CD4-positive, alpha-beta T cell (primary cell): ENCODE measurements at regions of chr10 and their contacts with region 1.

Region 1: GRCh38 chr10:23438550-23439441 is at the start of gene OTUD1:
- DNase-seq: peak; percentile 88 to 98 (median 94)
- ATAC-seq: peak; percentile 87
- H3K4me3 ChIP-seq: peak within 1 kb of the TSS; percentile 74
- H3K4me3 Mint-ChIP-seq: peak within 1 kb of the TSS; percentile 98
- H3K27ac ChIP-seq: peak within 1 kb of the TSS; percentile 76 to 81
- H3K27ac Mint-ChIP-seq: peak within 1 kb of the TSS; percentile 99
- H3K4me1 ChIP-seq: peaks cover 21% of the 10 kb centered on the region
- H3K4me1 Mint-ChIP-seq: peaks cover 42% of the 10 kb centered on the region
- H3K27me3 ChIP-seq: no peaks in the 10 kb centered on the region
- H3K27me3 Mint-ChIP-seq: no peaks in the 10 kb centered on the region
- CTCF ChIP-seq: no peak
- total RNA-seq, gene OTUD1: 94.5 to 94.8 TPM

Region 2: GRCh38 chr10:22003079-22003913 is 1435.5 kb before region 1 on chr10 and contains the start of gene DNAJC1:
- CTCF ChIA-PET with region 1: no interaction called
- POLR2A ChIA-PET with region 1: no interaction called
- intact Hi-C with region 1: loop called in 1 of 2 experiments (anchors 10 kb)
- DNase-seq: peak; percentile 96 to 99 (median 98)
- ATAC-seq: peak; percentile 91
- H3K4me3 ChIP-seq: peak within 1 kb of the TSS; percentile 91
- H3K4me3 Mint-ChIP-seq: peak within 1 kb of the TSS; percentile 95
- H3K27ac ChIP-seq: peak within 1 kb of the TSS; percentile 75 to 79
- H3K27ac Mint-ChIP-seq: peak within 1 kb of the TSS; percentile 84
- H3K4me1 ChIP-seq: peaks cover 12% of the 10 kb centered on the region
- H3K4me1 Mint-ChIP-seq: peaks cover 28% of the 10 kb centered on the region
- H3K27me3 ChIP-seq: no peaks in the 10 kb centered on the region
- H3K27me3 Mint-ChIP-seq: no peaks in the 10 kb centered on the region
- CTCF ChIP-seq: no peak
- total RNA-seq, gene DNAJC1: 16.8 to 19.3 TPM

Region 3: GRCh38 chr10:23095404-23095965 is 343.3 kb before region 1 on chr10 and contains the start of gene MSRB2:
- CTCF ChIA-PET with region 1: no interaction called
- POLR2A ChIA-PET with region 1: no interaction called
- intact Hi-C with region 1: loop called in 1 of 2 experiments (anchors 10 kb)
- DNase-seq: peak; percentile 49 to 93 (median 70)
- ATAC-seq: peak; percentile 45
- H3K4me3 ChIP-seq: peak within 1 kb of the TSS; percentile 70
- H3K4me3 Mint-ChIP-seq: peak within 1 kb of the TSS; percentile 94
- H3K27ac ChIP-seq: peak within 1 kb of the TSS; percentile 48 to 50
- H3K27ac Mint-ChIP-seq: peak within 1 kb of the TSS; percentile 86
- H3K4me1 ChIP-seq: peaks cover 19% of the 10 kb centered on the region
- H3K4me1 Mint-ChIP-seq: peaks cover 41% of the 10 kb centered on the region
- H3K27me3 ChIP-seq: no peaks in the 10 kb centered on the region
- H3K27me3 Mint-ChIP-seq: no peaks in the 10 kb centered on the region
- CTCF ChIP-seq: no peak
- total RNA-seq, gene MSRB2: 0.66 to 1.4 TPM

Region 4: DNA sequence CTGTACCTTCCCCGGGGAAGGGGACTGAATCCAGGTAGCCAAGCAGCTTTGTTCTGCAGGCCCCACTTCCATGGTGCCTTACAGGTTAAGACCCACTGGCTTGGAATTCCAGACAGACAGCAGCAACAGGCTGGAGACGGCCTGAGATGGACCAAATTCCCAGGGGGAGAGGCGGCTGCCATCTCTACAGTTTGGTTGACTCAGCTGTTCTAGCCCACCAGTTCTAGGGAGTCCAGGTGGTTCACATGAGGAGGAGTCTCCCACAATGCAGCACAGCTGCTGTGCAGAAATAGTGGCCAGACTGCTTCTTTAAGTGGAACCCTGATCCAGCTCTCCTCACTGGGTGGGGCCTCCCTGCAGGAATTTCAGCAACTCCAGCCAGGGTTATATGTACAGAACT is 168.3 kb before region 1 on chr10:
- CTCF ChIA-PET with region 1: no interaction called
- POLR2A ChIA-PET with region 1: no interaction called
- intact Hi-C with region 1: no loop called
- DNase-seq: no peak
- ATAC-seq: no peak
- H3K4me3 ChIP-seq: no peak overlapping the region
- H3K4me3 Mint-ChIP-seq: no peak overlapping the region
- H3K27ac ChIP-seq: no peak overlapping the region
- H3K27ac Mint-ChIP-seq: no peak overlapping the region
- H3K4me1 ChIP-seq: no peaks in the 10 kb centered on the region
- H3K4me1 Mint-ChIP-seq: no peaks in the 10 kb centered on the region
- H3K27me3 ChIP-seq: no peaks in the 10 kb centered on the region
- H3K27me3 Mint-ChIP-seq: peaks cover 11% of the 10 kb centered on the region
- CTCF ChIP-seq: no peak

Region 5: DNA sequence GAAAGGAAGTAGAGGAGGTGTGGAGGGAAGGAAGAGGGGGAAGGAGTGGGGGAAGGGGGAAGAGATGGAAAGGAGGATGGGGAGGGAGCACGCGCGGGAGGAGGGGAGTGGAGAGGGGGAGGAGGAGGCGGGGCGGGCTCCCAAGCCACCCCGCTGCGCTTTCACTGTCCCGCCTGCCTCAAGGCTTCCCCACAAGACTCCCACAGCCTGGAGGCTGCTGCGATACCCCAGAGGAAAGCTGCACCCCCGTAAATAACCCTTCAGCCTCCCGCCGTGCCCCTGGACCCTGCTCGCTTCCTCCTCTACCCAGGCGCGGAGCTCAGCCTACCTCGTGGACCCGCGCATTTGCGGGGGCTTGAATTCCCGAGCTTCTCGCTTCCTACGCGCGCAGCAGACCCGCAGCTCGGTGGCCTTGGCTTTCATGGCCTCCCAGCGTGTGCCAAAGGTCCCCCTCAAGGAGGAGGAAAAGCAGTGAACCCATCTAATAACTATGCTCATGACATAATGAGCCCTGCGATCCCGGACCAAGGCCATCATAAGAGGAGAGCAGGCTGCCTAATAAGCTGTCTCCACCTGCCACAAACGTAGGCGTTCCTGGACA is 94.5 kb before region 1 on chr10 and contains the start of gene C10orf67:
- CTCF ChIA-PET with region 1: interaction called, 3 read pairs
- POLR2A ChIA-PET with region 1: interaction called, 16 read pairs
- intact Hi-C with region 1: loop called (anchors 5 to 10 kb)
- DNase-seq: peak in 8 of 14 experiments; percentile 12 to 62 (median 34)
- ATAC-seq: peak; percentile 53
- H3K4me3 ChIP-seq: peak within 1 kb of the TSS; percentile 73
- H3K4me3 Mint-ChIP-seq: peak within 1 kb of the TSS; percentile 92
- H3K27ac ChIP-seq: no peak within 1 kb of the TSS
- H3K27ac Mint-ChIP-seq: peak within 1 kb of the TSS; percentile 65
- H3K4me1 ChIP-seq: peaks cover 29% of the 10 kb centered on the region
- H3K4me1 Mint-ChIP-seq: peaks cover 38% of the 10 kb centered on the region
- H3K27me3 ChIP-seq: no peaks in the 10 kb centered on the region
- H3K27me3 Mint-ChIP-seq: peaks cover 7% of the 10 kb centered on the region
- CTCF ChIP-seq: no peak
- total RNA-seq, gene C10orf67: not detected

Region 6: DNA sequence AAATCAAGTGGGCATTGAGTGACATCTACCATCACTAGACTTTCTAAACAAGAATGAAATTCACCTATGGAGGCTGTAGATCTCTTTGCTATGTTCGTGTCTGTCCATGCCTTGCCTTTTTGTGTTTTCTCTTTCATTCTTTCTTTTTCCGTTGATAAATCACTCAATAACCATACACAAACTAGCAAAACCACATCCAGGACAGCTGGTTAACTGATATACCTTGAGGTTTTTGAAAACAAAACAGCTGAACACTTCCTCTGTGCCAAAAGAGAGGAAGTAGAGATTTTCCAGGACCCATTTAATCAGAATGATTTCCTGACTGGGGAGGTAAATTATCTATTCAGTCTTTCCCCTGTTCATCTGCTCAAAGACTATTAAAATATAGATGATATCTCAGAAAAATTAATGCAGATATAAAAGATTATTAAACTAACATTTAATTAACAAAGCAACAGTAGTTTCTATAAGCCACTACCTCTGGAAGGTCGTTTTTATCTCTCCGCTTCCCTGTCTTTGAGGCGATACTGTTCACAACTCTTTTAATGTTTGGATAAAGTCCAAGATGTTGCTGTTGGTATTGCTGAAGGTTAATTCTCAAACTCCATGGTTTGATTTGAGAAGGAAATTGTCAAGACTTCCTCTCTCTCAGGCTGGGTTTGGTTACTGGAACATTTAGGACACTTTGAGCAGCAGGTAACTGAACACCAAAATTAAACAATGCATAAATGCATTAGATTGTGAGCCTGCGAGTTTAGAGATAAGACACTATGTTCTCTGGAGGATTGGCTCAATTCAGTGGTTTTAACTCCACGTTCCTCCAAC is 69.8 kb before region 1 on chr10:
- CTCF ChIA-PET with region 1: no interaction called
- POLR2A ChIA-PET with region 1: interaction called, 49 read pairs
- intact Hi-C with region 1: loop called (anchors 5 kb)
- DNase-seq: peak in 4 of 14 experiments; percentile 21 to 80 (median 38)
- ATAC-seq: peak; percentile 60
- H3K4me3 ChIP-seq: peak overlapping the region; percentile 10
- H3K4me3 Mint-ChIP-seq: peak overlapping the region; percentile 39
- H3K27ac ChIP-seq: peak overlapping the region in 1 of 2 donors; percentile 7
- H3K27ac Mint-ChIP-seq: peak overlapping the region; percentile 66
- H3K4me1 ChIP-seq: peaks cover 45% of the 10 kb centered on the region
- H3K4me1 Mint-ChIP-seq: peaks cover 50% of the 10 kb centered on the region
- H3K27me3 ChIP-seq: no peaks in the 10 kb centered on the region
- H3K27me3 Mint-ChIP-seq: no peaks in the 10 kb centered on the region
- CTCF ChIP-seq: no peak

Region 7: DNA sequence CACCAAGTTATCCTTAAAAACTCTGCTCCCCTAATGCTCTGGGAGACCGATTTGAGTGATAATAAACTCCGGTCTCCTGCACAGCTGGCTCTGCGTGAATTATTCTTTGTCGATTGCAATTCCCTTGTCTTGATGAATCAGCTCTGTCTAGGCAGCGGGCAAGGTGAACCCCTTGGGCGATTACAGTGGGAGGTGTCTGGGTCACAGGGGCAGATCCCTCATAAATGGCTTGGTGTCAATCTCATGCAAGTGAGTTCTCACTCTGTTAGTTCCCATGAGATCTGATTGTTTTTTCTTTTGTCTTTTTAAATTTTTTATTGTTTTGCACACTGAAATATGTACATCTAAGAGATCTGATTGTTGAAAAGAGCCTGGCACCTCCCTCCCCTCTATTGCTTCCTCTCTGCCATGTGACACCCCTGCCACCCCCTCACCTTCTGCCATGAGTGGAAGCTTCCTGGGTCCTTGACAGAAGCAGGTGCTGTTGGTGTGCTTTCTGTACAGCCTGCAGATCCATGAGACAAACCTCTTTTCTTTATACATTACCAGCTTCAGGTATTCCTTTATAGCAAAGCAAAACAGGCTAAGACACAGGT is 20.6 kb after region 1 on chr10:
- CTCF ChIA-PET with region 1: no interaction called
- POLR2A ChIA-PET with region 1: no interaction called
- intact Hi-C with region 1: no loop called
- DNase-seq: no peak
- ATAC-seq: no peak
- H3K4me3 ChIP-seq: no peak overlapping the region
- H3K4me3 Mint-ChIP-seq: no peak overlapping the region
- H3K27ac ChIP-seq: no peak overlapping the region
- H3K27ac Mint-ChIP-seq: no peak overlapping the region
- H3K4me1 ChIP-seq: no peaks in the 10 kb centered on the region
- H3K4me1 Mint-ChIP-seq: peaks cover 5% of the 10 kb centered on the region
- H3K27me3 ChIP-seq: no peaks in the 10 kb centered on the region
- H3K27me3 Mint-ChIP-seq: no peaks in the 10 kb centered on the region
- CTCF ChIP-seq: no peak

Region 8: GRCh38 chr10:24617771-24618391 is 1179.1 kb after region 1 on chr10:
- CTCF ChIA-PET with region 1: no interaction called
- POLR2A ChIA-PET with region 1: interaction called, 17 read pairs
- intact Hi-C with region 1: no loop called
- DNase-seq: peak; percentile 14 to 79 (median 35)
- ATAC-seq: no peak
- H3K4me3 ChIP-seq: no peak overlapping the region
- H3K4me3 Mint-ChIP-seq: peak overlapping the region; percentile 64
- H3K27ac ChIP-seq: no peak overlapping the region
- H3K27ac Mint-ChIP-seq: peak overlapping the region; percentile 89
- H3K4me1 ChIP-seq: no peaks in the 10 kb centered on the region
- H3K4me1 Mint-ChIP-seq: peaks cover 50% of the 10 kb centered on the region
- H3K27me3 ChIP-seq: no peaks in the 10 kb centered on the region
- H3K27me3 Mint-ChIP-seq: no peaks in the 10 kb centered on the region
- CTCF ChIP-seq: peak; percentile 86

Region 9: GRCh38 chr10:25016376-25017154 is 1577.8 kb after region 1 on chr10 and contains the start of gene THNSL1:
- CTCF ChIA-PET with region 1: no interaction called
- POLR2A ChIA-PET with region 1: no interaction called
- intact Hi-C with region 1: loop called (anchors 10 kb)
- DNase-seq: peak; percentile 95 to 99 (median 97)
- ATAC-seq: peak; percentile 93
- H3K4me3 ChIP-seq: peak within 1 kb of the TSS; percentile 82
- H3K4me3 Mint-ChIP-seq: peak within 1 kb of the TSS; percentile 94
- H3K27ac ChIP-seq: peak within 1 kb of the TSS; percentile 86 to 89
- H3K27ac Mint-ChIP-seq: peak within 1 kb of the TSS; percentile 95
- H3K4me1 ChIP-seq: peaks cover 19% of the 10 kb centered on the region
- H3K4me1 Mint-ChIP-seq: peaks cover 29% of the 10 kb centered on the region
- H3K27me3 ChIP-seq: no peaks in the 10 kb centered on the region
- H3K27me3 Mint-ChIP-seq: no peaks in the 10 kb centered on the region
- CTCF ChIP-seq: no peak
- total RNA-seq, gene THNSL1: 0.31 to 0.52 TPM